ENCODE measurements at regions of chr1 and their contacts with region 1.

Region 1: GRCh38 chr1:58755468-58755872 is 28.4 kb downstream of the JUN start:
- DNase-seq: peak; percentile 83
- ATAC-seq: peak; percentile 94
- H3K4me3 Mint-ChIP-seq: peak overlapping the region; percentile 31
- H3K27ac Mint-ChIP-seq: peak overlapping the region; percentile 88
- H3K4me1 Mint-ChIP-seq: peaks cover 46% of the 10 kb centered on the region
- H3K27me3 Mint-ChIP-seq: no peaks in the 10 kb centered on the region
- CTCF ChIP-seq: no peak

Region 2: DNA sequence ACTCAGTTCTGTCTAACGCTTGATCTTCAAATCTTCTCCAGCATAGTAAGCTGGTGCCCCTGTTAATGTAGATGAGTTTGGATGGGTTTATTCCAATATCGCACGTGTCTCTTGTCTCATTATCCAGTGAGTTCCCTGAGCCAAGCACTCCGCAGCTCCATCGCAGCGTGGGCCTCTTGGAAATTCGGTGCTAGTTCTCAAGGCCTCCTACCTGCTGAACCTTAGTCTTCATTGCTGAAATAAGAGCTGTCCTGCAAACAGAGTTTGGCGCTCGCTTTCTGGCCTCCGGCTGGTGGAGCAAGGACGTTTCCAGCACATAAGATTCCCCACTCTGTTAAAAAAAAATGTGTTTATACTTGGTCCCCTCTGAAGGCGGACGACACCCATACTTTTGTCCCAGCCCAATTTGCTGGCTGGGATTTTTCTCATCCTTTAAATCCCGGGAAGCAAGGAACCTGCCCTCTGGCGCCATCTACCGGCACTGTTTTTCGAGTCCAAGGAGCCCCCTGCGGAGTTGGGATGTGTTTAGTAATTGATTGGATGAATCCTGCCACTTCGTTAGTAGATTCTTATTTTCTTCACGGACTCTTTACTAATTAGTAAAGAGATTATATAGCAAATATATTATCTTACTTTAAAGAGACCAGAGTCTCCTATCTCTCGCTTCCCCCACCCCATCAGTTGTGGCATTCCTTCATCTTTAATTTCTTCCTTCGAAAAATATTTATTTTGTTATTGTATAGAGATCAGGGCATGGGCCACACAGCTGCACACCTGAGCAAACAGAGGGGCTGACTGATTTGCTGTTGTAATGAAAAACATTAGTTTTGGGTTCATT is 13.7 kb after region 1 on chr1:
- CTCF ChIA-PET with region 1: interaction called, 30 read pairs
- POLR2A ChIA-PET with region 1: no interaction called
- intact Hi-C with region 1: no loop called
- DNase-seq: peak; percentile 65
- ATAC-seq: no peak
- H3K4me3 Mint-ChIP-seq: no peak overlapping the region
- H3K27ac Mint-ChIP-seq: no peak overlapping the region
- H3K4me1 Mint-ChIP-seq: peaks cover 7% of the 10 kb centered on the region
- H3K27me3 Mint-ChIP-seq: no peaks in the 10 kb centered on the region
- CTCF ChIP-seq: peak; percentile 96

Region 3: DNA sequence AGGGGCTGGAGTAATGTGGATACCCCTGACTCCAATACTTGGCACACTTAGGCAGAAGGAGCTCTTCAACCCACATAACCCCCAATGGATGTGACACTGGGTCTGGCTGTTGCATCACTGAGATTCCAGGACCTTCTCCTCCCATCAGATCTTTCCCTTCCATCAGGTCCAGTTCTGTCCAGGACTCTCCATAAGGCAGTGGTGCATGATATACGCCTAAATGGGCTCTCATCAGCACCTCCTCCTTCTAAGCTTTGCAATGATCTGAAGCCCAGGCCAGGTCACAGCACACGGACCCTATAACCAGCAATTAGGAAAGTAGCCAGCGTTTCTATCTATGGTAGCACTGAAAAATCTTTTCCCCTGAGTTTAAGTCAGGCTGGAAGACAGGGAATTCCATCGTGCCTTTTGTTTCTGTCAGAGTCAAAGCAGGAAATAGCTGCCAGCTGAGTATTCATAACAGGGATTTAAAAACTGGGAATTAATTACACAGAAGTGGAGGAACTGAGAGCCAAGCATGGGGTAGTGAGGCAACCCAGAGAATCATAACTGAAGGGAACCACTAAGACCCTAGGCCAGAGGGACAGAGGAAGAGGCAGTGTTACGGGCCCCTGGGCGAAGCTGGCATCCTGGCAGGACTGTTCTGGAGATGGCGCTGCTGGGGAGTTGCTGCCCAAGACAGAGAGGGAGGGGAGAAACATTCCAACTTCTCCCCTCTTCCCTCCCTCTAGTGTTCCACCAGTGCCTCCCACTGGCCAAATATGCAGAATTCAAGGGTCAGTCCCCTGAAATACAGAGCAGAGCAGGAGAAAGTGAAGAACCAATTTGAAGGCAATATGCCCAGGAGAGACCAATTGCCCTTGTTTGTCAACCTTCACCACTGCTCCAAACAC is 1021.7 kb after region 1 on chr1:
- CTCF ChIA-PET with region 1: no interaction called
- POLR2A ChIA-PET with region 1: no interaction called
- intact Hi-C with region 1: no loop called
- DNase-seq: no peak
- ATAC-seq: no peak
- H3K4me3 Mint-ChIP-seq: no peak overlapping the region
- H3K27ac Mint-ChIP-seq: no peak overlapping the region
- H3K4me1 Mint-ChIP-seq: no peaks in the 10 kb centered on the region
- H3K27me3 Mint-ChIP-seq: no peaks in the 10 kb centered on the region
- CTCF ChIP-seq: no peak

Measured in activated CD8-positive, alpha-beta T cell treated with anti-CD3 and anti-CD28 coated beads for 36 hours (primary cell).